Activated CD4-positive, alpha-beta memory T cell treated with anti-CD3 and anti-CD28 coated beads for 36 hours (primary cell): ENCODE measurements at regions of chr6 and their contacts with region 1.

Region 1: DNA sequence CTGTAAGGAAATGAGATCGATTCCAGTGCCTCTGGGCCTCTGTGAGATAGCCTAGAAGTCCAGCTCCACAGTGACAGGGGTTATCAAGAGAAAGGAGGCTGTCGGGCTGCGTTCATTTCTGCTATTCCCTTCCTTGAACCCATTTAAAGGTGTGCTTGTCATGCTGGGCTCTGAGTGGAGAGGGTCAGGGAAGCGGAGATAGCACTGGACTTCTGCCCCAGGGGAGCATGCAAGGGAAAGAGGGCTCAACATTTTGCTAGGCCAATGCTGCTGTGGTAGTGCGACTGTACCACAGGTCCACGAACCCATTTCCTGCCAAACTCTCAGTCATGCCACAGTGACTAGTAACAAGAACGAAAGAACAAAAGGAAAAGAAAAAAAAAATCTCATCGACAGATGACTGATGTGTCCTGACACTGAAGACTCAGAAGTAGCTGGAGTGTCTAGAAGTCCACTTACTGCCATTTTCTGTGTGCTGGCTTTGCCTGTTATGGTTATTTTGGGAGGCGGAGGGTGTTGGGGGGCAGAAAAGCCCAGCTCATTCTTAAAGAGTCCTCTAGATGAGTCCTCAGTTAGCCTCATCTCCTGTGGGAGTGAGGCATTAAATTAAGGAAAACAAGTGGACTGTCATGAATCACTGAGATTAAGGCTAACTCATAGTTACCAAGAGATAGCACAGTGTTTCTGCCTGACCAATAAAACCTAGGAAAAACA is 8.1 kb downstream of the NEDD9 start:
- DNase-seq: peak; percentile 75
- H3K4me3 Mint-ChIP-seq: peak overlapping the region; percentile 44
- H3K27ac Mint-ChIP-seq: peak overlapping the region; percentile 87
- H3K4me1 Mint-ChIP-seq: peaks cover 59% of the 10 kb centered on the region
- H3K27me3 Mint-ChIP-seq: no peaks in the 10 kb centered on the region

Region 2: GRCh38 chr6:11069760-11070159 is 154.6 kb before region 1 on chr6:
- CTCF ChIA-PET with region 1: no interaction called
- POLR2A ChIA-PET with region 1: no interaction called
- intact Hi-C with region 1: no loop called
- DNase-seq: no peak
- H3K4me3 Mint-ChIP-seq: no peak overlapping the region
- H3K27ac Mint-ChIP-seq: no peak overlapping the region
- H3K4me1 Mint-ChIP-seq: no peaks in the 10 kb centered on the region
- H3K27me3 Mint-ChIP-seq: peaks cover 3% of the 10 kb centered on the region

Region 3: DNA sequence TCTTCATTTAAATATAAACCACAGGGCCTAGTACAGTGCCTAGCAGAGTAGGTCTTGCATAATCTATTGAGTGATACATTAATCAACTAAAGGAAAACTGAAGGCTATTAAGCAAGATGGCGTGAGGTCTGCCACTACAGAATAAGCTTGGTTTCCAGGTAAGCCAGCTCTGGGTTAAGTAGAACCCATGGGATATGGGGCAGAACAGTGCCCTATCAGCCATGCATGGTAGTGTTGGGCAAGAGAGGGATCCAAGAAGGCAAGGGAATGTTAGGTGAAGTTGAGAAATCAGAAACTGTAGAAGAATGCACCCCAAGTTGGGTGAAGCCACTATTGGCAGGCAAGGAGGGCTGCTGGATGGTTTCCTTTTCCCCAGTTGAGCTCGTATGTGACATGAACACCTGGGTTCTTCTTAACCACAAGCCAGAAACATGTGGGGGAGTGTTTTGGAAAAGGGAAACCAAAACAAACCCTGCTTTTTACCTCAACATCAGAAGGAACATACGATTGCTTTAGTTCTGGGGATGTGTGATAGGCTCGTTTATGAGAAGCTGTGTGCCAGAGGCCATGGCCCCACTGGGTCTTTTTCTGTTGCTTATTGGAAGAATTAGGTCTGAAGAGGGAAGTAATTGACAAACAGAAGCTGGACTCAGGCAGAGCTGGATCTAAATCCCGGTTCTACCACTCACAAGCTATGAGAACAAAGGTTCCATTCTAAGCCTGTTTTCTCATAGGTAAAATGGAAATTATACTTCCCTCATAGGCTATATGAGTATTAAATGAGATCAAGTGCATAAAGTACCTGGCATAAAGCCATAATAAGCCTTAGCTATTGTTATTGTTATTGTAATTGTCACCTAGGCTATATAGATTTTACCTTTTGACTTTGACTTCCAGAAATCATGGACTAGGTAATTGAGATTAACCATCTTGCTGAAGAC is 25.5 kb before region 1 on chr6:
- CTCF ChIA-PET with region 1: no interaction called
- POLR2A ChIA-PET with region 1: interaction called, 7 read pairs
- intact Hi-C with region 1: loop called (anchors 1 kb)
- DNase-seq: peak; percentile 37
- H3K4me3 Mint-ChIP-seq: no peak overlapping the region
- H3K27ac Mint-ChIP-seq: peak overlapping the region; percentile 73
- H3K4me1 Mint-ChIP-seq: peaks cover 54% of the 10 kb centered on the region
- H3K27me3 Mint-ChIP-seq: no peaks in the 10 kb centered on the region

Region 4: GRCh38 chr6:11209906-11210305 is 14.5 kb before region 1 on chr6:
- CTCF ChIA-PET with region 1: no interaction called
- POLR2A ChIA-PET with region 1: no interaction called
- intact Hi-C with region 1: loop called (anchors 2 kb)
- DNase-seq: no peak
- H3K4me3 Mint-ChIP-seq: no peak overlapping the region
- H3K27ac Mint-ChIP-seq: no peak overlapping the region
- H3K4me1 Mint-ChIP-seq: peaks cover 36% of the 10 kb centered on the region
- H3K27me3 Mint-ChIP-seq: no peaks in the 10 kb centered on the region

Region 5: DNA sequence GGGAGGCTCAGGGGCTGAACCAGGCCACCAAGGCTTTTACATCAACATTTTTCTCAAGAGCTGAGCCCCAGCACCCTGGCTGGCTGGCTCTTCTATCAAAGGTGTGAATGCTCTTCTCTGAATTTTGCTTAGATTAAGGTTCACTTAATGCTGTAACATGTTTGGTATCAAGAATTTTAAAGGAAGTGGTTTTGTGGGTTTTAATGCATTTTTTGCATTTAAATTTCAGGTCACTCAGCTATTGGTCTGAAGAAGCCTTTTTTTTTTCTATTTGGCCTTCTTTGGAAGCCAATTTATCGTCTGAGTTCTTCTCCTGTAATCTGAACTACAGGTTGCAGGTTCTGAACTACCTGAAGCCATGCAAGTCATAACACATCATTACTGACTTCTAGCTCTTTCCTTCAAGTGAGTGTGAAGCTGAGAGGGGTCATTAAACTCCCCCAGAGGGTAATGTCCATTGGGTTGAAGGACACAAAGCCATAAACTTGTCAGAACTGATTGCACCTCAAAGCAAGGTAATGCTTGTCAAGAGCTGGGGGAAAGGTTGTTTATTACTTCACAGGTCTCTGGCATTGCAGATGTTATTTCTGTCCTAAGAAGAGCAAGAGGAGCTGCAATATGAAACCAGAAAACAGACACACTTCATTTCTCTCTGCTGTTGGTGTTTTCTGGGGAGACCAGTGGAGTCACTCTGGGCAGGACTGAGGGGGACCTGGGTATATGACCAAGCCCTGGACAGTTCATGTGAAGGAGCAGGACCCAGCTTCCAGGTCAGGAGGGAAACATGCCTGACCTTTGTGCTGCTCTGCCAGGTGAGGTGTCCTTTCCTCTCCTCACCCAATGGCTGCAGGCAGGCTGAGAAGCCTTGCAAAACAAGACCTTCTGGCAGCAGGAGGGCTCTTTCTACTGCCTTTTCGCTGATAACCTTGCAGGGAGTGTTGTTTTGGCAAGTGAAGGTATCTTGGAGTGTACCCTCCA is 34.1 kb after region 1 on chr6:
- CTCF ChIA-PET with region 1: no interaction called
- POLR2A ChIA-PET with region 1: interaction called, 4 read pairs
- intact Hi-C with region 1: loop called (anchors 2 kb)
- DNase-seq: peak; percentile 48
- H3K4me3 Mint-ChIP-seq: peak overlapping the region; percentile 21
- H3K27ac Mint-ChIP-seq: peak overlapping the region; percentile 62
- H3K4me1 Mint-ChIP-seq: peaks cover 61% of the 10 kb centered on the region
- H3K27me3 Mint-ChIP-seq: no peaks in the 10 kb centered on the region

Region 6: DNA sequence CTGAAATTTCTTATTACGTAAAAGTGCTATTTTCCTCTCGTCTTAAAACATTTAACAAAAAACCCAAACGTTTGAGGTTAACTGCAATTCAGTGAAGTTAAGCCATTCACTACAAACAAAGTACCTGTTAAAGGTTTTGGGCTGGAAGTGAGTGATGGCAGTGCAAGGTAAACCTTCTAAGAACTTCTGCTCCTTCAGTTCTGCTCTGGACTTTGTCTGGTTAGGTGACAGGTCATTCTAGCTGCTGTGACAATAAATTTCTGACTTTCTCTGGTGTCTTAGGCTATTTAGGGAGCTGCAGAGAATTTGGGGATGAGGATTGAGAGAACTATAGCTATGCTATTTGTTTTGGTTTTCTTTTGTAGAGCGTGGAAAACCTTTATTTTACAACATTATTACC is 44.6 kb after region 1 on chr6:
- CTCF ChIA-PET with region 1: no interaction called
- POLR2A ChIA-PET with region 1: no interaction called
- intact Hi-C with region 1: no loop called
- DNase-seq: no peak
- H3K4me3 Mint-ChIP-seq: no peak overlapping the region
- H3K27ac Mint-ChIP-seq: no peak overlapping the region
- H3K4me1 Mint-ChIP-seq: peaks cover 18% of the 10 kb centered on the region
- H3K27me3 Mint-ChIP-seq: no peaks in the 10 kb centered on the region

Region 7: DNA sequence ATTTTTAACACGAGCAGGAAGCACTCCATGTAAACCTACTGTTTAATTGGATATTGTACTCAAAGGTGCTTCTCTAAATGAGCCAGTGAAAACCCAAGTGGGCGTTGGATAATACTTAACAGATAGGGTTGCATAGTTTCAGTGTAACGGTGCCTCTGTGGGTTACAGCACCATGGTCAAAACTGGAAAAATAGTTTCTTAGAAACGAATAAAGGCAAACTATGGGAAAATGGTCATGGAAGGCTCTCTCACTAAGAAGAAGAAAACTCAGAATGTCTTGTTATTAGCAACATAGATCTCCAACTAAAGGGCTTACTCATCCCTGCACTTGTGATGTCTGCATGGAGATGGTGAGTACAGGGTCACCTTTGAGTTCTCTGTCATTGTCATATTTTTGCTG is 67.2 kb after region 1 on chr6:
- CTCF ChIA-PET with region 1: no interaction called
- POLR2A ChIA-PET with region 1: no interaction called
- intact Hi-C with region 1: loop called (anchors 2 kb)
- DNase-seq: peak; percentile 50
- H3K4me3 Mint-ChIP-seq: no peak overlapping the region
- H3K27ac Mint-ChIP-seq: peak overlapping the region; percentile 56
- H3K4me1 Mint-ChIP-seq: peaks cover 27% of the 10 kb centered on the region
- H3K27me3 Mint-ChIP-seq: no peaks in the 10 kb centered on the region

Region 8: DNA sequence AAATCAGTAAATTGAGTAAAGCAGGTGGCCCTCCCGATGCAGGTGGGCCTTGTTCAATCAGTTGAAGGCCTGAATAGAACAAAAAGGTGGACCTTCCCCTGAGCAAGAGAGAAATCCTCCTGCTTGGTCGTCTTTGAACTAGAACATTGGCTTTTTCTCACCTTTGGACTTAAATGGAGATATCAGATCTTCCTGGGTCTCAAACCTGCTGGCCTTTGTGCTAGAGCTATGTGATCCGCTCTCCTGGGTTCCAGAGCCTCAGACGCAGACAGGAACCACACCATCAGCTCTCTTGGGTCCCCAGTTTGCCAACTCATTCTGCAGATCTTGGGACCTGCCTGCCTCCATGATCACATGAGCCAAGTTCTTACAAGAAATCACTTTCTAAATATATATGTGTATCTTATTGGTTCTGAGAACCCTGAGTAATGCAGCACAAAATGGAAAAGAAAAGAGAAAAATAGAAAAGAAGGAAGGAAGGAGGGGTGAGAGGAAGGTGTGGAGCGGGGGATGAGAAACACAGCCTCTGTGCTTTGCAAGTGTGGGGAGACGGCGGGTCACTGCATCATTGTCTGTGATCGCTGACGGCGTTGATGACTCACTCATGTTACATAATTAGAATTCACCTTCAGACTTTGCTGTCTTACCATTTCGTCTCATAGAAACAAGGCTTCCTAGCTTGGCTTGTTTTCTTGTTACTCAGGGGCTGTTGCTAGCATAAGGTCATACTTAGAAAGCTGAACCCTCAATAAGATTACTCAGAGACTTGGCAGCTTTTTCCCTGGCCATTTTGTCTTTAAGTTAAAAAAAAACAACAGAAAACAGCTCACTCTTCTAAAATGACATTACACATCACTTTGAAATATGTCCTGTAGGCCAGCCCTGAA is 93.7 kb after region 1 on chr6:
- CTCF ChIA-PET with region 1: interaction called, 4 read pairs
- POLR2A ChIA-PET with region 1: no interaction called
- intact Hi-C with region 1: loop called (anchors 1 kb)
- DNase-seq: peak; percentile 88
- H3K4me3 Mint-ChIP-seq: peak overlapping the region; percentile 14
- H3K27ac Mint-ChIP-seq: peak overlapping the region; percentile 92
- H3K4me1 Mint-ChIP-seq: peaks cover 63% of the 10 kb centered on the region
- H3K27me3 Mint-ChIP-seq: no peaks in the 10 kb centered on the region